ENCODE measurements at regions of chr6 and their contacts with region 1.

Region 1: GRCh38 chr6:134132494-134133141 is 80.2 kb upstream of the SLC2A12 start:
- DNase-seq: no peak
- H3K27ac ChIP-seq: no peak overlapping the region
- CTCF ChIP-seq: no peak

Region 2: GRCh38 chr6:134173936-134174671 is 41.5 kb after region 1 on chr6:
- CTCF ChIA-PET with region 1: interaction called, 11 read pairs
- POLR2A ChIA-PET with region 1: no interaction called
- DNase-seq: peak; percentile 65
- H3K27ac ChIP-seq: peak overlapping the region; percentile 96
- CTCF ChIP-seq: peak; percentile 84

Measured in RWPE1 (cell line).